ENCODE measurements at regions of chr13 and their contacts with region 1.

Region 1: GRCh38 chr13:45092663-45093062 is 27.6 kb upstream of the GTF2F2 start:
- DNase-seq: no peak
- H3K4me3 ChIP-seq: no peak overlapping the region
- H3K27ac ChIP-seq: no peak overlapping the region
- H3K4me1 ChIP-seq: no peaks in the 10 kb centered on the region
- H3K27me3 ChIP-seq: no peaks in the 10 kb centered on the region
- CTCF ChIP-seq: no peak
- POLR2A ChIP-seq: no peak

Region 2: GRCh38 chr13:45063261-45063860 is 29.3 kb before region 1 on chr13:
- intact Hi-C with region 1: loop called (anchors 5 kb)
- DNase-seq: no peak
- H3K4me3 ChIP-seq: no peak overlapping the region
- H3K27ac ChIP-seq: no peak overlapping the region
- H3K4me1 ChIP-seq: no peaks in the 10 kb centered on the region
- H3K27me3 ChIP-seq: no peaks in the 10 kb centered on the region
- CTCF ChIP-seq: no peak
- POLR2A ChIP-seq: no peak

Region 3: DNA sequence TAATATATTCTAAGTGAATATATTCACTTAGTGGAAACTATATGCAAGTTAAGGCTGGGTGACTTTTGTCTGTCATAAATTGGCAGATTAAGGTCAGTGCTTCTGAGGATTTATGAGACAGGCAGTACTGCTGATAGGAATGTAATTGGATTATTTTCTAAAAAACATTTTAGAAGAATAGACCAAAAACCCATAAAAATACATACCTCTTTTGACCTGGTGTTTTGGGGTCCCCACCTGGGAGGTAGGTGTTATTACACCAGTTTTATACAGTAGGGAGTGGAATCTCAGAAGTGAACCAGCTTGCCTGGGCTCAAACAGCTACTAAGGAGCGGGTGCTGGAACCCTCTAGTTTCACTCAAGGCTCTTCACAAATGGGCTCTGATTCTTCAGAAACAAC is 397.4 kb after region 1 on chr13:
- intact Hi-C with region 1: no loop called
- DNase-seq: no peak
- H3K4me3 ChIP-seq: no peak overlapping the region
- H3K27ac ChIP-seq: no peak overlapping the region
- H3K4me1 ChIP-seq: no peaks in the 10 kb centered on the region
- H3K27me3 ChIP-seq: no peaks in the 10 kb centered on the region
- CTCF ChIP-seq: peak in 3 of 6 experiments; percentile 3 to 29 (median 26)
- POLR2A ChIP-seq: no peak